Esophagus muscularis mucosa (tissue), 4 donors: ENCODE measurements at regions of chr1 and their contacts with region 1.

Region 1: DNA sequence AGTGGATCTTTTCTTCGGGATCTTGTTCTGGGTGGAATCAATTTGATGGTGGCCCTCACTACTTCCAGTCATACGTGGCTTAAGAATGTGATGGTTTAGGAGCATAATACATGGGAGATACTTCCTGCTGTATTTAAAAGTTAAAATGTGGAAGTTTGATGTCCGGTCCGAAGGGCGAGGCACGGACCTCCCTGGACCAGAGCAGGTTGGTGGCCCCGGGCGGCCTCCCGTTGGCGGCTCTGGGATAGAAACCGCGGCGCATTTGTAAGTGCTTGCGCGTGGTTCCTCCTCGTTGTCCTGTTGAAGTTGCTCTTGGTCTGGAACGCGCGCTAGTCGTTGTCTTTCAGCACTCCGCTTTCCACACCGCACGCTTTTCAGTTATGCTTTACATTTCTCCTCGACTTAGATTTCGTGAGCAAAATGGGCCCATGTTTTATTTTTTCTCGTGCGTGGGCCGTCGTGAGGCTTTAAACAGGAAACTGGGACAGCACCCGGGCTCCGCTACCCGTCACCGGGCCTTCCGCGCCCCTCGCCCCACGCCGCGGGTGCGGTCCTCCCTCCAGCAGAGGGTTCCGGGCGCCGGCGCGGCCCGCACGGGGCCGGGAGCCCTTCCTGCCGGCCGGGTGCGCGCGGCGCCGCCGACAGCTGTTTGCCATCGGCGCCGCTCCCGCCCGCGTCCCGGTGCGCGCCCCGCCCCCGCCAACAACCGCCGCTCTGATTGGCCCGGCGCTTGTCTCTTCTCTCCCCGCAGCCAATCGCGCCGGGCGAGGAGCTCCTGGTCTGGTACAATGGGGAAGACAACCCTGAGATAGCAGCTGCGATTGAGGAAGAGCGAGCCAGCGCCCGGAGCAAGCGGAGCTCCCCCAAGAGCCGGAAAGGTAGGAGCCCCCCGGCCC is 48.9 kb downstream of the PRDM2 start:
- DNase-seq: peak; percentile 99
- H3K4me3 ChIP-seq: peak overlapping the region; percentile 64 to 97 (median 89)
- H3K27ac ChIP-seq: peak overlapping the region; percentile 89 to 97 (median 96)
- H3K4me1 ChIP-seq: peaks cover 29 to 45% (median 44%) of the 10 kb centered on the region in 4 donors
- H3K27me3 ChIP-seq: no peaks in the 10 kb centered on the region
- CTCF ChIP-seq: peak in 2 of 3 experiments; percentile 10 to 30
- EP300 ChIP-seq: no peak
- POLR2A ChIP-seq: peak; percentile 43

Region 2: DNA sequence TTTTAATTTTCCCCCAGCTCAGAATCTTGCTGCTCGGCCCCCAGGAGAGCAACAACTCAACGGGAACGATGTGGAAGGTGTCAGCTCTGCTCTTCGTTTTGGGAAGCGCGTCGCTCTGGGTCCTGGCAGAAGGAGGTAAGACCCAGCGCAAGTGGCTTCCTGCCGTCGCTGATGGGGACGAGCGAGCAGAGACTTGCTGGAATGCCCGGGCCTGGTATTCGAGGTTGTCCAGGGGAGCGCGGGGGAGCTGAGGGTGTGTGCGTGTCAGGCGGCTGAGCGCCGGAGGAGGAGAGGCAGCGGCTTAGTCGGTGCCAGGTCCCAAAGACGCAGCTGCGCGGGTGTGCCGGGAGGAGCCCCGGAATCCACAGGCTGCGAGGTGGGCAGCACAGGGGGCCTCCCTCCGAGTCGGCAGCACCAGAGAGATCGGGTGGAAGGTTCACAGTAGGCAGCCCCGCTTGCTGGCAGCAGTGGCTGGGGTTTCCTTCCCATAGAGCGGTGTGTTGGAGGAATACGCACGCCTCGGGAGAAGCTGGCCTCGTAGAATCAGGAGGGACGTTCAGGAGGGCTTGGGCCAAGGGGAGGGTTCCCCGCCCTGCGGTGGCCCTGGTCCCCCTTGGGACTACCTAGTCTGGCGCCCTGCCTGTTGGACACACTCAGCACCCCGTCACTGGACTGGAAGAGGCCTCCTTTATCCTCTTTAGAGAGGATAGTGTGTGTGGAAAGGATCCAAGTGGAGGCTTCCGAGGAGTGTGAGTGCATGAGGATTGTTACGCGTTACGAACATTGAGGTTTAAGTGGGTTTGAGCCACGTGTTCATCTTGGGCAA is 164.7 kb before region 1 on chr1:
- intact Hi-C with region 1: no loop called
- DNase-seq: no peak
- H3K4me3 ChIP-seq: peak overlapping the region; percentile 48 to 60 (median 54)
- H3K27ac ChIP-seq: peak overlapping the region; percentile 71 to 78 (median 74)
- H3K4me1 ChIP-seq: peaks cover 0 to 14% (median 11%) of the 10 kb centered on the region in 4 donors
- H3K27me3 ChIP-seq: peaks cover 0 to 69% (median 6%) of the 10 kb centered on the region in 4 donors
- CTCF ChIP-seq: no peak
- EP300 ChIP-seq: no peak
- POLR2A ChIP-seq: no peak

Region 3: DNA sequence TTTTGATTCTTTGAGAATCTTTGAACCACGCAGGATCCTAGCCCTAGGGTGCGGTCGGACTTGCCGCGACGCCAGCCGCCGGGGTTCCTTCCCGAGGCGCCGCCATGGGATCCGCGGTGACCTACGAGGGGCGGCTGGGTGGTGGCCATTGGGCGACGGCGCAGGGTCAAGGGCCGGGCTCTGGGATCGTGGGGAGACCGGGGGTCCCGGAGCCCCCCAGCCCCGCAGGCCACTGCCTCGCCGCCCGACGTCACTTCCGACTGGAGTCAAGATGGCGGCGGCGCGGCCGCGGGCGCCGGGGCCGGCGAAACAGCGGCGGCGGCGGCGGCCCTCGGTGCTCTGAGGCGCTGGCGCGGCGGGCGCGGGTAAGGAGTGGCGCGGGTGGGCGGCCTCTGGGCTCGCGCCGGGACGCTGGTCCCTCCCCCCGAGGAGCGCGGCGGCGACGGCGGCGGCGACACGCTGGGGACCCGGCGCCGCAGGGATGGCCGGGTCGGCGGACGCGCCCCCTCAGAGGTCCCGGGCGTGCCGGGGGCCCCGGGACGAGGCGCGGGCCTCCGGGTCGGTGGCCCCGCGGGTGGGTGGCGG is 48.8 kb before region 1 on chr1 and contains the start of gene PRDM2:
- intact Hi-C with region 1: loop called (anchors 2 kb)
- DNase-seq: no peak
- H3K4me3 ChIP-seq: peak within 1 kb of the TSS; percentile 69 to 90 (median 83)
- H3K27ac ChIP-seq: peak within 1 kb of the TSS; percentile 89 to 95 (median 94)
- H3K4me1 ChIP-seq: peaks cover 5 to 24% (median 19%) of the 10 kb centered on the region in 4 donors
- H3K27me3 ChIP-seq: peaks cover 0 to 5% (median 0%) of the 10 kb centered on the region in 4 donors
- CTCF ChIP-seq: no peak
- EP300 ChIP-seq: no peak
- POLR2A ChIP-seq: no peak
- total RNA-seq, gene PRDM2: 32.5 to 54.6 (median 44.2) TPM